Gastrocnemius medialis (tissue), 4 donors: ENCODE measurements at regions of chr6 and their contacts with region 1.

Region 1: DNA sequence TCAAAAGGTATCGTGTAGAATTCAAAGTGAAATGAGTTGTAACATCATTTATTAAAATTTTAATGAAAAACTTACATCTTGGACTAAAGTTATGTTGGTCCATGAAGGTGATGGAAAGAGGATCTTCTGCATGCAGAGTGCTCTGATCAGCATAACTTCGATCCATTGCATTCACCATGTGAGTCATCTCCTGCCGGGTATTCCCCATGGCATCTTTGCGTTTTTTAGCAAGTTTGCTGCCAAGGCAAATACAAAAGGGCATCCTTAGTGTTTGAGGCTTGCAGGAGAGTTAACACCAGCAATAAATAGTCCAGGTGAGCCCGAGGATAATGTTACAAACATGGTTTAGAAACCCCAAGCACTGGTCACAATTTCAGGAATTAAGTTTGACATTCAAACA is 104.2 kb upstream of the THEMIS start:
- DNase-seq: no peak
- ATAC-seq: no peak
- H3K4me3 ChIP-seq: no peak overlapping the region
- H3K27ac ChIP-seq: no peak overlapping the region
- H3K4me1 ChIP-seq: no peaks in the 10 kb centered on the region
- H3K27me3 ChIP-seq: no peaks in the 10 kb centered on the region
- CTCF ChIP-seq: no peak
- POLR2A ChIP-seq: no peak

Region 2: GRCh38 chr6:127737009-127737486 is 268.0 kb before region 1 on chr6:
- in situ Hi-C with region 1: no loop called
- intact Hi-C with region 1: no loop called
- DNase-seq: peak; percentile 2 to 17
- ATAC-seq: peak; percentile 74 to 83
- H3K4me3 ChIP-seq: no peak overlapping the region
- H3K27ac ChIP-seq: no peak overlapping the region
- H3K4me1 ChIP-seq: no peaks in the 10 kb centered on the region
- H3K27me3 ChIP-seq: no peaks in the 10 kb centered on the region
- CTCF ChIP-seq: peak; percentile 27 to 64 (median 41)
- POLR2A ChIP-seq: no peak

Region 3: DNA sequence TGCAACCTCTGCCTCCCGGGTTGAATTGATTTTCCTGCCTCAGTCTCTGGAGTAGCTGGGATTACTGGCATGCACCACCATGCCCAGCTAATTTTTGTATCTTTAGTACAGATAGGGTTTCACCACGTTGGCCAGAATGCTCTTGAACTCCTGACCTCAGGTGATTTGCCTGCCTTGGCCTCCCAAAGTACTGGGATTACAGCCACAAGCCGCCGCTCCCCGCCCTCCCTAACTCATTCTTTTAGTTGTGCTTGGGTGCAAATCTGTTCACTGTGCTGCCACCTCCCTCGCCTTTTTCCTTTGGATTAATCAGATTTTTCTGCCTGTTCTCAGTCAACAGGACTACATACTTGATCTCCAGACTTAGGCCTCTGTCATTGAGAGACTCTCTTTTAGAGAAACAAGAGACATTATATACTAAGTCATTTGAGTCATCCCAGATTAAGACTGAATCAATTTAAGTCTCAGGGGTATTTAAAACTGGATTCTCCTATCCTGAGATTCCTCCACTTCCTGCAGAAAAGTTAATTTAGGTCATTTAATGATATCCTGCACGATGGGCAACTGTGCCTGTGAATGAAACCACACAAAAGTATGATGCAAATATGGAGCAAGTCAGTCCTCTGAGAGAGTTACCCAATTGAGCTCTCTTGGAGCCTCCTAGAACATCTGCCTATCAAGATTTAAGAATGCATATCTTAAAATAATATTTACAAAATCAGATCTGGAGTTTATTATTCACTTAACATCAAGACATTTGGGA is 32.0 kb after region 1 on chr6:
- in situ Hi-C with region 1: no loop called
- intact Hi-C with region 1: loop called (anchors 1 kb)
- DNase-seq: no peak
- ATAC-seq: no peak
- H3K4me3 ChIP-seq: no peak overlapping the region
- H3K27ac ChIP-seq: no peak overlapping the region
- H3K4me1 ChIP-seq: no peaks in the 10 kb centered on the region
- H3K27me3 ChIP-seq: no peaks in the 10 kb centered on the region
- CTCF ChIP-seq: no peak
- POLR2A ChIP-seq: no peak